ENCODE measurements at regions of chr19 and their contacts with region 1.

Region 1: DNA sequence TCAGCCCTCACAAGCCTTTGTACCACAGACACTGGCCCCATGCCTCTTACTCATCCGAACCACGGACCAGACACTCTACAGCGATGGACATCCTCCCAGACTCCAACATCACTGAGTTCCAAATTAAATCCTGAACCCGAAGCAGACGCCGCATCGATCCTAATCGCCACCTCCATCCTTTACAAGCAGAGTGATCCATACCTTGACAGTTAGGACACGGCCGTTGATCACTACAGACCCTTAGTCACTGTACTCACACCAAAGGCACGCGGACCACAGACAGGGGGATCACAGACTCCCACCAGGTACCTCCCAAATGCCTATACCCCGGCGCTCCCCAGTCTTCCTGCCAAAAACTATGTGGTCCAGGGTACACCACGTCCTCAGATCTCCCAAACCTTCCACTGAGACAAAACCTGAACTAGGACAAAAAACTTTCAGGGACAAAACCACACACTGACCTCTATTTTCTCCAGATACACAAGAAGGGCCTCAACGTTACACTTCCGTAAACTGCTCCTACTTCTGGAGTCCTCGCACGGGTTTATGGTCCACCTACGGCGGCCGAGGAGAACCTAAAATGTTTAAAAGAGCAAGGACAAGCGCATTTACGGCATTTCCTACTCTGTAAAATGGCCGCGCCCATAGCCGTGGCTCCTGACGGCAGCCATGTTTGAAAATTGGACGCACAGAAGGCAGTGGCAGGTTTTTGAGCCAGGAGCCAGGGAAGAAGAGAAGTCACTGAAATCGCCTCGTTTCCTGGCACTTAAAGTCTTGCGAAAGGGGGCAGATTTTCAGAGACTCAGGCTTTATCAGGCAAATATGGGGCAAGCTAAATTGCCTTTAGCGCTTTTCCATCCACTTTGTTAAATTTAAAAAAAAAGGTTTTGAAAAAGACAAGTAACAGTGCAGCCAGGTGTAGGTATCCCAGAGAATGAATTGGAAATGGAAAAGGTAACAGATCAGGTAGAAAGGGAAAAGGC is at the start of gene ZNF350:
- DNase-seq: peak; percentile 96
- total RNA-seq, gene ZNF350: 11.2 to 12.1 TPM

Region 2: DNA sequence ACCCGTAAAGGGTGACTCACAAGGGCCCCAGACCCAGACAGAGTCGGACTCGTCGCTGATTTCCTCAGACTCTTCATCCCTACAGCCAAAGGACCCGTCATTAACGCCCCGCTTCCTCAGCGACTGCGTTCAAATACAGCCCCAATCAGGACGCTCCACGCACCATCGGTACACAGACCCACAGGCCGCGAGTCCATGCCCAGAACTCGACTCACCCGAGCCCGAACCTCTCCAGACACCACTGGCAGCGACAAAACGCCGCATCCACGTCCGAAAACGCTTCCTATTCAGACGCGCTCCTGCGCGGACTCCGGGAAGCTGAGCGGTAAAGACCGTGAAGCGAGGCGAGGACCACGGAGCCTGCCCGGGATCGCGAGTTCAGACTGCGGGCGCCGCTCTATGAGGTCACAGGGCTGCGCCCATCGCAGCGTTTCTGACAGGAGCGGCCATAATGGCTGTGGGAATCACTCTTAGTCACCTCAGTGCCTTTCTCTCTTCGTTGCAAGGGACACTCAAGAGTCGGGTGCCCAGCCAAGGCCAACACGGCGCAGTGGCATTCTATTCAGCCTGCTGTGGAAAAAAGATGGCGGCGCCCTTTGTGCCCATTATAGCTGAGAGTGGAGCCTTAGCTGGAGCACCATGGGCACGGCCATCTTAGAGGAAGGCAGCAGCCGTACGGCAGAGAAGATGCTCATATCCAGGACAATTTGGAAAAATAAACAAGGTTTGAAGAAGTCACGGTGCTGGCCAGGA is 41.6 kb after region 1 on chr19 and contains the start of gene ZNF614:
- intact Hi-C with region 1: loop called in 1 of 2 experiments (anchors 1 kb)
- DNase-seq: peak; percentile 97
- total RNA-seq, gene ZNF614: 7.6 to 9.8 TPM

Region 3: DNA sequence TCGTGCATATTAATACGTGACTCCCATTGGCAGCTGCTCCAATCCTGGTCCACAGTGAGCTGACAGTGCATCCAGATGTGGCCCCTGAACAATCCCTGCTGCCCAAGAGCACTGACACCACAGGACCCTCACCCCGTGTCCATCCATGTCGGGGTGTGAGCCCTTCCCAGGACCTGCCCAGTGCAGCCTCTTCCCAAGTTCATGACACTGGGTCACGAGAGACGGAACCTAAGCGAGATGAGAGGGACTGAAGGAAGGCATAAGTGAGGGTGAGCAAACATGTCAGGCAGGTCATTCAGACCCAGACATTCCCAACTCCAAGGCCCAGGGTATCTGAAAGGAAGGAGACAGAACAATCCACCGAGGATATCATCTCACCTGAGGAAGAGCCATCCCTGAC is 867.3 kb after region 1 on chr19:
- intact Hi-C with region 1: no loop called
- DNase-seq: no peak